ENCODE measurements at regions of chr4 and their contacts with region 1.

Region 1: DNA sequence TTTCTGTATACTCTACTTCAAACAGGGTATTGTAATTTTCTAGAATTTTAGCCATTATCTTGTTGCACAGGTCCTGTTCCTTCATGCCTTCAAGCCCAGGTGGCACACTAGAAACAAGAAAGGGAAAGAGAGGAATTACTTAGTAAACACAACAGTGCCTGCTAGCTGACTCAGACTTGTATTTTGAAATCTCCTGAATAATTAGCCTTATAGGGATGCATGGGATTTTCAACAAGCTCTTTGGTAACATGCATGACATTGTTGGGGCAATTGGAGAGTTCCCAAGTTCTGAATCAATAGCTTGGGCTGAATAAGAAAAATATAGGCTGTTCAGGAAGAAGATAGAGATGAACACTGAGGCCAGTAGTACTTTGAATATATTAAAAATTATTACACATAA is 118.8 kb downstream of the FAM13A start:
- DNase-seq: peak; percentile 7 to 87
- H3K4me3 ChIP-seq: no peak overlapping the region
- H3K27ac ChIP-seq: peak overlapping the region; percentile 52
- H3K4me1 ChIP-seq: peaks cover 23% of the 10 kb centered on the region
- H3K27me3 ChIP-seq: no peaks in the 10 kb centered on the region
- CTCF ChIP-seq: no peak

Region 2: DNA sequence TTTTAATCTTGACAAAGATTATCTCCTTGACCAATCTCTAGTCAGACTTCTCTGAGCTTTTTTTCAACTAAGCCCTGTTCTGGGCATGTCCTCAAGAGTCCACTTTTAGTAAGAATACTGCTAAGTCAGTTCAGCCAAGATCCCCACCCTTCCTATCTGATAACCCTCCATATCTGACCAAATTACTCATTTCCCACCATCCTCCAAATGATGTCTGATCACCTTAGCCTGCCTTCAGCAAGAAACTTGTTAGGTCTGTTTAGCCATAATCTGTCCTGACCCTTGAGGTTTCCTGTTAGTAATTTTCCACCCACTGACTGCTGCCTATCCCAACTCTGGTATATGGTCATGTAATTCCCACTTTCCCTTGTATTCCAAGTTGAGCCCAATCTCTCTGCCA is 53.6 kb after region 1 on chr4:
- CTCF ChIA-PET with region 1: no interaction called
- POLR2A ChIA-PET with region 1: no interaction called
- intact Hi-C with region 1: loop called (anchors 1 kb)
- DNase-seq: peak; percentile 28 to 53
- H3K4me3 ChIP-seq: no peak overlapping the region
- H3K27ac ChIP-seq: peak overlapping the region; percentile 49
- H3K4me1 ChIP-seq: peaks cover 20% of the 10 kb centered on the region
- H3K27me3 ChIP-seq: no peaks in the 10 kb centered on the region
- CTCF ChIP-seq: no peak

Measured in PC-9 (cell line).